Activated CD4-positive, alpha-beta T cell treated with anti-CD3 and anti-CD28 coated beads, Interleukin-2, amount 10 ng/mL, durations not matched to agents 7 days and 5 days (primary cell): ENCODE measurements at regions of chr6 and their contacts with region 1.

Region 1: GRCh38 chr6:16420715-16421461 is 182.5 kb downstream of the GMPR start:
- DNase-seq: peak; percentile 53
- H3K4me3 Mint-ChIP-seq: peak overlapping the region; percentile 59
- H3K27ac Mint-ChIP-seq: peak overlapping the region; percentile 98
- H3K4me1 Mint-ChIP-seq: peaks cover 50% of the 10 kb centered on the region
- H3K27me3 Mint-ChIP-seq: no peaks in the 10 kb centered on the region

Region 2: DNA sequence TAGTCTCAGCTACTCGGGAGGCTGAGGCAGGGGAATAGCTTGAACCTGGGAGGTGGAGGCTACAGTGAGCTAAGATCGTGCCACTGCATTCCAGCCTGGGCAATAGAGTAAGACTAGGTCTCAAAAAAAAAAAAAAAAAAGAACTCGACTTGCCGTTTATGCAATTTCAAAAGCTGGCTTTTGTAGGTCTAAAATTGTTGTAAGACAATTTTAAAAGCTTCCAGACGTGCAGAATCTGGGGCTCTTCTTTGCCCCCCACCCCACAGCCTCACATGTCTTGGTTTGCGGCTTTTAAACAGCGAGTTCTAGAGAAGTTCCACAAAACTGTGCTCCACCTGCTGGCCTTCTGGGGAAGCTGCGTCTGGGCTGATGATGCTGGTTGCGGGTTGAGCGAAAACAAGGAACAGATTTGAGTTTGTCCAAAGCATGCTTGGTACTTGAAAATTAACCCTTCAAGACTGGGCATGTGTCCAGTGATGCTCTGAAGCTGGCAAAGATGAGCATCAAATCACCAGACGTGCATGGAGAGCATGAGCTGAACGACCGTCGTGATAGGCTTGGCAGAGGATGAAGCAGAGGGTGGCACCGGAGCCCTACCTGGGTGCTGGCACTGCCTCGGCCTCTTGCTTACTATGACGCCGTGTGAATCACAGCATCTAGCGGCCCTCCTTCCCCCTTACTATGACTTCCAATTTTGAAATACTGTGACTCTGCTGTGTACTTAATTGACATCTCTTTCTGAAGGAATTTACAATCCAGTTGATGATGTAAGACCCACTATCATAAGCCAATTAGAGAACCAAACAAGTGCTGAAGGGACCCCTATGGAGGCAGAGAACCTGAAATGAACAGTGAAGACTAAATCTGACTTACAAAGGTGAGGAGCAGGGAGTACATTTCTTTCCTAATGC is 11.1 kb before region 1 on chr6:
- CTCF ChIA-PET with region 1: interaction called, 23 read pairs
- POLR2A ChIA-PET with region 1: no interaction called
- DNase-seq: peak; percentile 60
- H3K4me3 Mint-ChIP-seq: no peak overlapping the region
- H3K27ac Mint-ChIP-seq: peak overlapping the region; percentile 1
- H3K4me1 Mint-ChIP-seq: peaks cover 38% of the 10 kb centered on the region
- H3K27me3 Mint-ChIP-seq: no peaks in the 10 kb centered on the region